ENCODE measurements at regions of chr14 and their contacts with region 1.

Region 1: GRCh38 chr14:49767562-49768300 is at the start of gene KLHDC2:
- DNase-seq: peak; percentile 94
- ATAC-seq: peak; percentile 88
- H3K4me3 Mint-ChIP-seq: peak within 1 kb of the TSS; percentile 90
- H3K27ac Mint-ChIP-seq: peak within 1 kb of the TSS; percentile 97
- H3K4me1 Mint-ChIP-seq: peaks cover 31% of the 10 kb centered on the region
- H3K27me3 Mint-ChIP-seq: no peaks in the 10 kb centered on the region
- total RNA-seq, gene KLHDC2: 25.3 to 32.3 TPM

Region 2: GRCh38 chr14:49578141-49578540 is 189.6 kb before region 1 on chr14:
- CTCF ChIA-PET with region 1: no interaction called
- DNase-seq: no peak
- ATAC-seq: no peak
- H3K4me3 Mint-ChIP-seq: no peak overlapping the region
- H3K27ac Mint-ChIP-seq: no peak overlapping the region
- H3K4me1 Mint-ChIP-seq: peaks cover 34% of the 10 kb centered on the region
- H3K27me3 Mint-ChIP-seq: no peaks in the 10 kb centered on the region

Region 3: GRCh38 chr14:49641697-49642129 is 126.0 kb before region 1 on chr14:
- CTCF ChIA-PET with region 1: no interaction called
- DNase-seq: no peak
- ATAC-seq: no peak
- H3K4me3 Mint-ChIP-seq: no peak overlapping the region
- H3K27ac Mint-ChIP-seq: peak overlapping the region; percentile 13
- H3K4me1 Mint-ChIP-seq: peaks cover 40% of the 10 kb centered on the region
- H3K27me3 Mint-ChIP-seq: no peaks in the 10 kb centered on the region

Region 4: GRCh38 chr14:49687942-49688700 is 79.6 kb before region 1 on chr14 and contains the start of gene POLE2:
- CTCF ChIA-PET with region 1: interaction called, 35 read pairs
- DNase-seq: peak; percentile 86
- ATAC-seq: peak; percentile 88
- H3K4me3 Mint-ChIP-seq: peak within 1 kb of the TSS; percentile 87
- H3K27ac Mint-ChIP-seq: peak within 1 kb of the TSS; percentile 91
- H3K4me1 Mint-ChIP-seq: peaks cover 42% of the 10 kb centered on the region
- H3K27me3 Mint-ChIP-seq: no peaks in the 10 kb centered on the region
- total RNA-seq, gene POLE2: 39.9 to 40.2 TPM

Measured in activated CD8-positive, alpha-beta memory T cell treated with anti-CD3 and anti-CD28 coated beads, Interleukin-2, amount 10 ng/mL, durations not matched to agents 7 days and 5 days (primary cell).